Endothelial cell of umbilical vein (primary cell): ENCODE measurements at regions of chr16 and their contacts with region 1.

Region 1: DNA sequence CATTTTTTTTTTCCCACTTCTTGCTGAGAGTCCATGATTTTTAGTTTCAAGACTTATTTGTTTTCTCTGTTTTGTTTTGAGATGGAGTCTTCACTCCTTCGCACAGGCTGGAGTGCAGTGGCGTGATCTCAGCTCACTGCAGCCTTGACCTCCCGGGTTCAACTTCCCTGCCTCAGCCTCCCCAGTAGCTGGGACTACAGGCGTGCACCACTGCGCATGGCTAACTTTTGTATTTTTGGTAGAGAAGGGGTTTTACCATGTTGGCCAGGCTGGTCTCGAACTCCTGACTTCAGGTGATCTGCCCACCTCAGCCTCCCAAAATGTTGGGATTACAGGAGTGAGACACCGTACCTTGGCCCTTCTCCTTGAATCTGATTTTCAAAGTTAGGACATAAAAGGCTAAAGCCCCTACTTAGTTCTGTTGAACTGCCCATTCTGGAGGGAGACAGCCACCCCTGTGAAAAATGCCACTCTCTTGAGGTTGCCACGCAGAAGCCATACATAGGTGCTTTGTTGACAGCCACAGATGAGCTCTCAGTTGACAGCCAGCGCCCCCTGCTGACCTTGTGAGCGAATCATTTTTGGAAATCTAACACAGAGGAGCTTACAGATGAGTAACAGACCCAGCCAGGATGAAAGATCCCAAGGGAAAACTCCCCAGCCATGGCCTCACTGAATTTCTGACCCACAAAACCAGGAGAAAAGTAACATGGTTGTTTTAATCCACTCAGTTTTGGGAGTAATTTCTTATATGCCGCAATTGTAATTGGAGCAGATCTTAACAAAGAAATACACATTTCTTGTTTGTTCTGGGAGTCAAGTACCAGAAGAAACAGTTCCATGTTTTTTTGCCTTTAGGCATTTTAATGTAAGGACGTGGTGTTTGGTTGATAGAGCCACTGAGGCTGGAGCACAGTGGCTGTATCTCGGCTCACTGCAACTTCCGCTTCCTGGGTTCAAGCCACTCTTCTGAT is 38.8 kb downstream of the PKD1L3 start:
- DNase-seq: peak; percentile 91
- H3K4me3 ChIP-seq: no peak overlapping the region
- H3K27ac ChIP-seq: no peak overlapping the region
- H3K4me1 ChIP-seq: peaks cover 3% of the 10 kb centered on the region
- H3K27me3 ChIP-seq: peaks cover 0 to 3% of the 10 kb centered on the region in 2 experiments
- CTCF ChIP-seq: peak; percentile 76 to 79
- POLR2A ChIP-seq: no peak

Region 2: GRCh38 chr16:71610936-71611871 is 350.1 kb before region 1 on chr16:
- CTCF ChIA-PET with region 1: interaction called, 11 read pairs
- POLR2A ChIA-PET with region 1: no interaction called
- dilution Hi-C with region 1: no loop called
- intact Hi-C with region 1: no loop called
- DNase-seq: peak; percentile 64
- H3K4me3 ChIP-seq: no peak overlapping the region
- H3K27ac ChIP-seq: no peak overlapping the region
- H3K4me1 ChIP-seq: no peaks in the 10 kb centered on the region
- H3K27me3 ChIP-seq: no peaks in the 10 kb centered on the region
- CTCF ChIP-seq: peak; percentile 97 to 99
- POLR2A ChIP-seq: no peak

Region 3: DNA sequence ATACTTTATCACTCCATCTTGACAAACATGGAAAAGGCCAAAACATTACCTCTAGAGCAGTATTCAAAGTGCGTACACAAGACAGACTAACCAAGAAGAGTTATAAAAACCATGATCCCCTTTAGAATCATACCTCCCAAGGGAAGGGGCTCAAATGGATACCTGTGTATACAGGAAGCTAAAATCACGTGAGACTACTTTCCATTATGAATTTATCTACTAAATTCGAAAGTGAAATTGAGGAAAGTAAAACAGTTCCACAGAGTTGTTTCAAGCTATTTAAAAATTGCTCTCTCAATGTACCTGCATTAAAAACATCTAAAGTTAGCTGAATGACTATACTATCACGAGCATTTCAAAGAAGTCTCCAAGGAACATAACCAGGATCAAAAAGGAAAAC is 185.4 kb before region 1 on chr16:
- CTCF ChIA-PET with region 1: interaction called, 12 read pairs
- POLR2A ChIA-PET with region 1: no interaction called
- dilution Hi-C with region 1: no loop called
- intact Hi-C with region 1: no loop called
- DNase-seq: no peak
- H3K4me3 ChIP-seq: no peak overlapping the region
- H3K27ac ChIP-seq: no peak overlapping the region
- H3K4me1 ChIP-seq: peaks cover 12% of the 10 kb centered on the region
- H3K27me3 ChIP-seq: no peaks in the 10 kb centered on the region
- CTCF ChIP-seq: no peak
- POLR2A ChIP-seq: no peak

Region 4: DNA sequence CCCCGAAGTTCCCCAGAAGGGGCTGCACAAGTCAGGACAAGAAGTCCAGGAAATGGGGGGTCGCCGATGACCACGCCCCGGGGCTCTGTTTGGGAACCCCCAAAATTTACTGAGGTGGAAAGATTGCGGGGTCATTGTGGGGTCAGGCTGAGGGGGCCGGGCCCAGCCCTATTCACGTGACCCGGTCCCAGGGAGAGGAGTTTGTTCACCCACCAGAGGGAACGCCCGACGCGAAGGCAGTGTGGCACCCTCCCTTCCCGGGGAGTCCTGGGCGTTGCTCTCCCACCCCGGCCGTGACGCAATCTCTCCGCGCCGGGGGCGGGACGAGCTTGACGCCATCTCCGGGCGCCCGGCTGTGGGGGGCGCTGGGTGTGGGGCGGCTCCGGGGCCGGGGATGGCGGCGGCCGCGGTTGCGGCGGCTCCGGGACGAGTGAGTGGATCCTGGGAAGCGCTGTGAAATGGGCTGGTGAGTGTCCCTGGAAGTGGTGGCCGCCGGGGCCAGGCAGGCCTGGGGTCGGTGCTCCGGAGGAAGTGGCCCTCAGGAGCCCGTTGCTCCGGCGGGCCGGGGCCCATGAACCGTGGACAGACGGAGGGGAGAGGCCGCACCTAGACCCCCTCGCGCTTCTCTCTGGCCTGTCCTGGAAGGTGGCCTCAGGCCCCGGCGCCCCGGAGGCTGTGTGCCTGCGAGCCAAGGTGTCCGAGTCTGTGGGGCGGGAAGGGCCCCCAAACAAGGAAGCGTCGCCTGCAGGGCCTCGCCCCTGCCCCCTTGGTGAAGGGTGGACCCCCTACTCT is 115.5 kb before region 1 on chr16 and contains the start of gene ATXN1L:
- CTCF ChIA-PET with region 1: interaction called, 9 read pairs
- POLR2A ChIA-PET with region 1: interaction called, 3 read pairs
- dilution Hi-C with region 1: no loop called
- intact Hi-C with region 1: loop called (anchors 5 kb)
- DNase-seq: peak; percentile 71
- H3K4me3 ChIP-seq: peak within 1 kb of the TSS; percentile 70 to 91 (median 83)
- H3K27ac ChIP-seq: peak within 1 kb of the TSS; percentile 88
- H3K4me1 ChIP-seq: peaks cover 12% of the 10 kb centered on the region
- H3K27me3 ChIP-seq: no peaks in the 10 kb centered on the region
- CTCF ChIP-seq: no peak
- POLR2A ChIP-seq: peak; percentile 93
- total RNA-seq, gene ATXN1L: 23.9 and 24.9 TPM in 2 replicates

Region 5: GRCh38 chr16:71883849-71884638 is 77.3 kb before region 1 on chr16 and contains the start of gene ZNF821:
- CTCF ChIA-PET with region 1: interaction called, 212 read pairs
- POLR2A ChIA-PET with region 1: interaction called, 3 read pairs
- dilution Hi-C with region 1: no loop called
- intact Hi-C with region 1: loop called (anchors 1 kb)
- DNase-seq: peak; percentile 72
- H3K4me3 ChIP-seq: peak within 1 kb of the TSS; percentile 45 to 97 (median 90)
- H3K27ac ChIP-seq: peak within 1 kb of the TSS; percentile 62
- H3K4me1 ChIP-seq: peaks cover 24% of the 10 kb centered on the region
- H3K27me3 ChIP-seq: no peaks in the 10 kb centered on the region
- CTCF ChIP-seq: peak; percentile 28 to 58
- POLR2A ChIP-seq: peak; percentile 56
- total RNA-seq, gene ZNF821: 7.3 and 9.6 TPM in 2 replicates

Region 6: DNA sequence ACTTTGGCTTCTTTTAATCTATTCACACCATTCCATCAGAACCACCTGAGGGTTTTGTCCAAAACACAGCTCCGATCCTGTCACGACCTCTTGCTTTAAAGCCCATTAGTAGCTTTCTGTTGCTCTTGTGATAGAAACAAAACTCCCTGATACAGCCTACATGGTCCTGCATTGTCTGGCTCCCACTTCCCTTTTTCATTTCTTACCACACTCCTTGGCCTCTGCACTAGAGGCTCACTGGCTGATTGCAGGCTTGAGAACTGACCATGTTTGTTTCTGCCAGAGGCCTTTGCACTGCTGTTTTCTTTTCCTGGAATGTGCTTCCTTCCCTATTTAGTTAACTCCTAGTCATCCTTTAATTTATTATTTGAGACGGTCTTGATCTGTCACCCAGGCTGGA is 42.3 kb before region 1 on chr16:
- CTCF ChIA-PET with region 1: interaction called, 14 read pairs
- POLR2A ChIA-PET with region 1: no interaction called
- dilution Hi-C with region 1: no loop called
- intact Hi-C with region 1: no loop called
- DNase-seq: no peak
- H3K4me3 ChIP-seq: no peak overlapping the region
- H3K27ac ChIP-seq: no peak overlapping the region
- H3K4me1 ChIP-seq: peaks cover 31% of the 10 kb centered on the region
- H3K27me3 ChIP-seq: no peaks in the 10 kb centered on the region
- CTCF ChIP-seq: no peak
- POLR2A ChIP-seq: no peak

Region 7: DNA sequence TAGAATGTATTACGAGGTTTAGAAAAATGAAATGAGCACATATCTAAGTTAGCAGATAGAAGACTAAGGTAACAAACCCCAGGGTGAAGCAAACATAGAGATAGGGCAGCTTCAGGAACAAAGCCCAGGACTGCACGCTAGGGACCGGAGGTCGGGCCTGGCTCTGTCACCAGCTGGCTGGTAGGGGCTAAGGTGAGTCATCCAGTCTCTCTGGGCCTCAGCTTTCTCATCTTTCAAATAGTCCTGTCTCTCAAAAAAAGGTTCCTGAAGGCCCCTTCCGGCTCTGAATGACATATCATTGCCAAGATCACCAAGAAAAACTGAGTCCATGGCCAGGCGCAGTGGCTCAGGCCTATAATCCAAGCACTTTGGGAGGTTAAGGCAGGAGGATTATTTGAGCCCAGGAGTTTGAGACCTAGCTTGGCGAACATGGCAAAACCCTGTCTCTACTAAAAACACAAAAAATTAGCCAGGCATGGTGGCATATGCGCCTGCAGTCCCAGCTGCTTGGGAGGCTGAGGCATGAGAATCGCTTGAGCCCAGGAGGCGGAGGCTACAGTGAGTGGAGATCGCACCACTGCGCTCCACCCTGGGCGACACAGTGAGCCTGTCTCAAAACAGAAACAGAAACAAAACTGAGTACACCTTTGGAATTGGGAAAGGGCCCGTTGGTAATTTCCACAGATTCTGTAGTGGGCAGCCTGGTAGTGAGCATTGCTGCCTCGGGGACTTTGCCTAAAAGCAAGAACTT is 12.9 kb after region 1 on chr16:
- CTCF ChIA-PET with region 1: interaction called, 29 read pairs
- POLR2A ChIA-PET with region 1: no interaction called
- dilution Hi-C with region 1: no loop called
- intact Hi-C with region 1: no loop called
- DNase-seq: no peak
- H3K4me3 ChIP-seq: no peak overlapping the region
- H3K27ac ChIP-seq: no peak overlapping the region
- H3K4me1 ChIP-seq: no peaks in the 10 kb centered on the region
- H3K27me3 ChIP-seq: no peaks in the 10 kb centered on the region
- CTCF ChIP-seq: no peak
- POLR2A ChIP-seq: no peak

Region 8: GRCh38 chr16:72246423-72246822 is 285.1 kb after region 1 on chr16:
- CTCF ChIA-PET with region 1: no interaction called
- POLR2A ChIA-PET with region 1: no interaction called
- dilution Hi-C with region 1: no loop called
- intact Hi-C with region 1: no loop called
- DNase-seq: no peak
- H3K4me3 ChIP-seq: no peak overlapping the region
- H3K27ac ChIP-seq: no peak overlapping the region
- H3K4me1 ChIP-seq: peaks cover 6% of the 10 kb centered on the region
- H3K27me3 ChIP-seq: no peaks in the 10 kb centered on the region
- CTCF ChIP-seq: no peak
- POLR2A ChIP-seq: no peak

Region 9: DNA sequence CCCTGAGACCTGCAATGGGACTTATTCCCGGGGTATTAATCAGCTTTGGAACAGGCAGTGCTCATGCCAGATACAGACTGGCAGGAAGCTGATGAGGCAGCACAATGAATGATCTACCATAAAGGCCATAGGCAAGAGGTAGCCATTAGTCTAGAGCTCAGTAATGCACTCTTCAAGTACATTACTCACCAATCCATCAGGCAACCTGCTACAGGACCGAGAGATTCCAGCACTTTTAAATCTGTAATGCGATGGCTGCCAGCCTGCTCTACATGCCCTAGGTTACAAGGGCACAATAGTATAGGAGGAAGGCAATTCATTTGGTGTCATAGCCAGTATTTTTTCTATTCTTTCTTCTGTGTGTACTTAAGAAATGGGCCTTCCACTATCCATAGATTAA is 428.4 kb after region 1 on chr16:
- CTCF ChIA-PET with region 1: no interaction called
- POLR2A ChIA-PET with region 1: no interaction called
- dilution Hi-C with region 1: no loop called
- intact Hi-C with region 1: no loop called
- DNase-seq: no peak
- H3K4me3 ChIP-seq: no peak overlapping the region
- H3K27ac ChIP-seq: no peak overlapping the region
- H3K4me1 ChIP-seq: no peaks in the 10 kb centered on the region
- H3K27me3 ChIP-seq: no peaks in the 10 kb centered on the region
- CTCF ChIP-seq: no peak
- POLR2A ChIP-seq: no peak

Region 10: DNA sequence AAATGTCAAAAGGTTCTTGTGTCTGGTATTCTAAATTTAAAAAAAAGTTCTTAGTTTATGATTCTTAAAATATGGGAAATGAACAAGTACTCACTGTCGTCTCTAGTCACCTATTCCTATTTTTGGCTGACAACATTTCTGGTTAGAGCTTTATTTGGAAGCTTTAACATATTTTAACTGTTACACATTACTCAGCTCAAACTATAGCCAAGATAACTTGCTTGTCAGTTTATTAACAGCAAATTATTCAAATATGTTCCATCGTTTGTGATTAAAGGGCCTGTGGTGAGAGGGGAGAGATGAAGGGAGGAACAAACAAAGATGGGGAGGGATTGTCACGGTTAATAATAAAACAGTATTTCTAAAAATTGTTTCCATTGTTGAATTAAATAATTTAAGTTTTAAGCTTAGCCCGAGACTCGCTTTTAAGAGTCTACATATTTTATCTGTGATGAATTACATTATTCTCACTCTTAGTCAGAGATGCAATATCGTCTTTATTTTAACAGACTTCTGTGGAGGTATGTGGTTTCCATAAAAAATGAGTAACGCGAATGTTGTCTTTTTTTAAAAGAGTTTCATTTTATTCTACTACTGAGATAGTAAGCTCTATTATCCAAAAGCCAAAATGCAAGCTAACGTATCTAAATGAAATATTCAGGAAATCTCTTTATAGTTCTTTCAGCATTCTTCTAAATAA is 532.5 kb after region 1 on chr16:
- CTCF ChIA-PET with region 1: no interaction called
- POLR2A ChIA-PET with region 1: no interaction called
- dilution Hi-C with region 1: no loop called
- intact Hi-C with region 1: no loop called
- DNase-seq: no peak
- H3K4me3 ChIP-seq: no peak overlapping the region
- H3K27ac ChIP-seq: no peak overlapping the region
- H3K4me1 ChIP-seq: no peaks in the 10 kb centered on the region
- H3K27me3 ChIP-seq: no peaks in the 10 kb centered on the region
- CTCF ChIP-seq: no peak
- POLR2A ChIP-seq: no peak